ENCODE measurements at regions of chr6 and their contacts with region 1.

Region 1: GRCh38 chr6:136716917-136717715 is 75.2 kb downstream of the MAP3K5 start:
- DNase-seq: peak; percentile 72
- H3K4me3 ChIP-seq: peak overlapping the region; percentile 59
- H3K27ac ChIP-seq: peak overlapping the region; percentile 93
- H3K4me1 ChIP-seq: peaks cover 54% of the 10 kb centered on the region
- CTCF ChIP-seq: no peak

Region 2: DNA sequence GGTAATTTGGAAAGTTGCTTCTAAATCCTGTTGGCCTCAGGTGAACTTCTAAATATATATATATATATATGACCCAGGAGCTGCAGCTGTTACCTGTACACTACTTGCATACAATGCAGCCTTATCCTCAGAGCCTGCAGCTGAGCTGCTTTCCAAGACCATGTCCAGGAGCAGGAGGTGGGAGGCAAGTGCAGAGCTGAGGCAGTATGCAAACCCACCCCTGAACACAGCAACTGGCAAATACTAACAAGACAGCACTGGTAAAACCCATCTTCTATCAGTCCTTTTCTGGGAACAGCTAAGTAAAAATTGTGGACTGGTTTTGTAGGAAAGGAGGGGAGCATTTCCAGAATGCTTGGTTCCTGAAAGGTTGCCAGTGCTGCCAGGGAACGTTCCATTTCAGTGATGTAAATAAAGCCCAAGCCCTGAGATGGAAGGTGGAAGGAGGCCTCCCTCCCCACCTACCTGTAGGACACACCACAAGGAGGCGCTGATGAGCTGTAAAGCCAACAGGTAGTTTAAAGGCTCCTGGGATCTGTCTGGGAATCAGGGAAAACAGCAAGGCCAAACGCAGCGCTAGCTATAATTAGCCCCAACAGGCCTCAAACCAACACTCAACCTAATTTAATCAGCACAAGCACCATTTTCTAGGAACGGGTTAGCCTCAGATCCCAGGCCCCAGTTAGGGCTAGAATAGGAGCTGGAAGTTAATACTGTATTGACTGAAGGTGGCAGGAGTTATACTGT is 73.1 kb before region 1 on chr6:
- CTCF ChIA-PET with region 1: interaction called, 9 read pairs
- POLR2A ChIA-PET with region 1: interaction called, 31 read pairs
- intact Hi-C with region 1: loop called (anchors 2 kb)
- DNase-seq: peak; percentile 81
- H3K4me3 ChIP-seq: no peak overlapping the region
- H3K27ac ChIP-seq: no peak overlapping the region
- H3K4me1 ChIP-seq: peaks cover 17% of the 10 kb centered on the region
- CTCF ChIP-seq: peak; percentile 99

Measured in OCI-LY7 (cell line).